Sciatic nerve (tissue), 2 donors: ENCODE measurements at regions of chr16 and their contacts with region 1.

Region 1: GRCh38 chr16:15636392-15636873 is 6.5 kb downstream of the MARF1 start:
- DNase-seq: no peak
- ATAC-seq: peak; percentile 44

Region 2: DNA sequence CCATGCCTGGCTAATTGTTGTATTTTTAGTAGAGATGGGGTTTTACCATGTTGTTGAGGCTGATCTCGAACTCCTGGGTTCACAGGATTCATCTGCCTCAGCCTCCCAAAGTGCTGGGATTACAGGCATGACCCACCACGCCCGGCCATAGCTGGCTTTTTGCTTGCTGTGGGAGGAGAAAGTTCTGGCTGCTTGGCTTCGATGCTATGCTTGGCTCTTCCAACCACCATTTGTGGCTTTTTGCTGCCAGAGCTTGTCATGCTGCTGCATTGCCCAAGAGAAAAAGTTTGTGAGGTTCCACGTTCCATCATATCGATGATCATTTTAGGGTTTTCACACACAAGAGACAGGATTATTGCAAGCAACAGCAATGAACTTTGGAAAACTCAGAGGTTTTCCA is 185.8 kb before region 1 on chr16:
- intact Hi-C with region 1: no loop called
- DNase-seq: no peak
- ATAC-seq: peak; percentile 45

Region 3: GRCh38 chr16:15466886-15467781 is 169.3 kb before region 1 on chr16:
- intact Hi-C with region 1: loop called (anchors 10 kb)
- DNase-seq: no peak
- ATAC-seq: no peak